KBM-7 (cell line): ENCODE measurements at regions of chr4 and their contacts with region 1.

Region 1: GRCh38 chr4:165537028-165537648 is 158.3 kb downstream of the CPE start:
- DNase-seq: peak; percentile 71

Region 2: DNA sequence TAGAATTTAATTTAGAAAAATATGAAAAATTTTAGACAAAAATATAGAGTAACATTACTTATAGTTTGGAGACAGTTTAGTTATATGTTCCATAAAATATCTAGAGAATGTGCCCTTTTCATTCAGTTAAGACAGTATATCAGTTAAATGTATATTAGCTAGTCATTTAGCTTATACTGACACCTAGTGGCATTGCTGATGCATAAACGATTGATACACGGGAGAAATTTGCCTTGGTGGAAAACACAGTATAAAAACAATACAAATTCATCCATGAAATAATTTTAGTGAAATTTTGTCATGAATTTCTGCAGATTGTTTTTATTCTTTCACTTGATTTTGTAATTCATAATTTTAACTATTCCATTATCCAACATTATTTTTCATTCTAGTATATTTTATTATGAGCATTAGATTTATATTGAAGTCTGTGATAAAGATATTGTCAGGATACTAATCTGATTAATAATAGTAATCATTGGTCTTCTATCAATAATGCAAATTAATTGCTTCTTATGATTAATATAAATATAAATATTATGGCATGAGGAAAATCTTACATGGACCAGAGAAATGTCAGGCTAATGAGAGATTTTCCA is 554.9 kb after region 1 on chr4:
- in situ Hi-C with region 1: loop called (anchors 25 kb)
- DNase-seq: peak; percentile 37